Caco-2 (cell line): ENCODE measurements at regions of chr1 and their contacts with region 1.

Region 1: GRCh38 chr1:201530741-201531531 is 8.0 kb upstream of the NAV1 start:
- DNase-seq: peak; percentile 67 to 76
- H3K4me3 ChIP-seq: no peak overlapping the region
- H3K4me3 Mint-ChIP-seq: no peak overlapping the region
- H3K27ac Mint-ChIP-seq: no peak overlapping the region
- H3K4me1 ChIP-seq: peaks cover 11% of the 10 kb centered on the region; the same call in 1 of the 2 replicates
- H3K4me1 Mint-ChIP-seq: no peaks in the 10 kb centered on the region
- H3K27me3 ChIP-seq: no peaks in the 10 kb centered on the region
- H3K27me3 Mint-ChIP-seq: no peaks in the 10 kb centered on the region
- CTCF ChIP-seq: peak; percentile 71 to 80

Region 2: GRCh38 chr1:201559679-201560162 is 28.8 kb after region 1 on chr1:
- CTCF ChIA-PET with region 1: interaction called, 7 read pairs
- POLR2A ChIA-PET with region 1: no interaction called
- intact Hi-C with region 1: loop called (anchors 1 kb)
- DNase-seq: peak; percentile 73 to 82
- H3K4me3 ChIP-seq: no peak overlapping the region
- H3K4me3 Mint-ChIP-seq: no peak overlapping the region
- H3K27ac Mint-ChIP-seq: no peak overlapping the region
- H3K4me1 ChIP-seq: no peaks in the 10 kb centered on the region
- H3K4me1 Mint-ChIP-seq: no peaks in the 10 kb centered on the region
- H3K27me3 ChIP-seq: peaks cover 1% of the 10 kb centered on the region
- H3K27me3 Mint-ChIP-seq: peaks cover 10% of the 10 kb centered on the region
- CTCF ChIP-seq: peak; percentile 88 to 95

Region 3: GRCh38 chr1:201703621-201704439 is 172.9 kb after region 1 on chr1:
- CTCF ChIA-PET with region 1: interaction called, 4 read pairs
- POLR2A ChIA-PET with region 1: no interaction called
- intact Hi-C with region 1: loop called (anchors 1 kb)
- DNase-seq: peak; percentile 77 to 87
- H3K4me3 ChIP-seq: no peak overlapping the region
- H3K4me3 Mint-ChIP-seq: no peak overlapping the region
- H3K27ac Mint-ChIP-seq: no peak overlapping the region
- H3K4me1 ChIP-seq: no peaks in the 10 kb centered on the region
- H3K4me1 Mint-ChIP-seq: no peaks in the 10 kb centered on the region
- H3K27me3 ChIP-seq: no peaks in the 10 kb centered on the region
- H3K27me3 Mint-ChIP-seq: peaks cover 3% of the 10 kb centered on the region
- CTCF ChIP-seq: peak; percentile 93